AG04449 (cell line): ENCODE measurements at regions of chr3 and their contacts with region 1.

Region 1: GRCh38 chr3:134794950-134795745 is at the start of gene EPHB1:
- DNase-seq: peak; percentile 74
- H3K4me3 ChIP-seq: peak within 1 kb of the TSS; percentile 64
- CTCF ChIP-seq: peak; percentile 94

Region 2: GRCh38 chr3:134473868-134474546 is 321.1 kb before region 1 on chr3:
- CTCF ChIA-PET with region 1: no interaction called
- POLR2A ChIA-PET with region 1: no interaction called
- DNase-seq: peak; percentile 56
- H3K4me3 ChIP-seq: no peak overlapping the region
- CTCF ChIP-seq: peak; percentile 45

Region 3: GRCh38 chr3:134769287-134769868 is 25.8 kb before region 1 on chr3:
- CTCF ChIA-PET with region 1: interaction called, 11 read pairs
- POLR2A ChIA-PET with region 1: no interaction called
- DNase-seq: no peak
- H3K4me3 ChIP-seq: no peak overlapping the region
- CTCF ChIP-seq: no peak

Region 4: GRCh38 chr3:135503760-135504686 is 708.9 kb after region 1 on chr3:
- CTCF ChIA-PET with region 1: interaction called, 69 read pairs
- POLR2A ChIA-PET with region 1: no interaction called
- DNase-seq: no peak
- H3K4me3 ChIP-seq: no peak overlapping the region
- CTCF ChIP-seq: peak; percentile 78

Region 5: DNA sequence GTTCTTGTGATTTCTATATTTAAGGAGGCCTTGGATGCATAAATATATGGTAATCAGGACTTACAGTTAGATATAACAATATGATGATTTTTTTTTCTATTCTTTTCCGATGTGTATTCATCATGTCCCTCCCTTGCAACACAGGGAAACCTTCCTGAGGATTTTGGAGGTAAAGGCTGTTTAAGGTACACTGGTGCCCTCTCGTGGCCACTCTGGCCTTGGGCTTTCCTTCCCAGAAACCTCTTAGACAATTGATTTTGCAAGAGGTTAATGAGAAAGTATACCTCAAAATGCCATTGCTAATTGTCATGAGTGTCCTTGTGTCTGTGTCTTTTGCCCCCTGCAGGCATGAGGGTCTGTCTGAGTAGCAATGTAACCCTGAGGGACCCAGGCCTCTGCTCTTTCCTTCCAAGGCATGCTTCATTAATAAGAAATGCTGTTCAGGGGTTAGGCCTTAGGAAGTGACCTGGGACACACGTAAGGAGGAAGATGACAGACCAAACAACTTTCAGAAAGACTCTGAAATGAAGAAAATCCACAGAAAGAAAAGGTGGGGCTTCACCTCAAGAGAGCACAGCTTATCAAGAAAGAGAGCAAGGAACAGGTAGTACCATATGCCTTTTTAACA is 1100.1 kb after region 1 on chr3:
- CTCF ChIA-PET with region 1: interaction called, 57 read pairs
- POLR2A ChIA-PET with region 1: no interaction called
- DNase-seq: peak; percentile 31
- H3K4me3 ChIP-seq: no peak overlapping the region
- CTCF ChIP-seq: peak; percentile 82